Ascending aorta (tissue), 2 donors: ENCODE measurements at regions of chr16 and their contacts with region 1.

Region 1: GRCh38 chr16:79770244-79771064 is 169.9 kb upstream of the MAF start:
- DNase-seq: peak; percentile 51 to 94
- H3K4me3 ChIP-seq: peak overlapping the region; percentile 64 to 75
- H3K27ac ChIP-seq: peak overlapping the region; percentile 78 to 82
- H3K4me1 ChIP-seq: peaks cover 0 to 22% of the 10 kb centered on the region in 2 donors
- H3K27me3 ChIP-seq: no peaks in the 10 kb centered on the region
- CTCF ChIP-seq: no peak

Region 2: GRCh38 chr16:79372503-79373184 is 397.8 kb before region 1 on chr16:
- intact Hi-C with region 1: no loop called
- DNase-seq: no peak
- H3K4me3 ChIP-seq: no peak overlapping the region
- H3K27ac ChIP-seq: no peak overlapping the region
- H3K4me1 ChIP-seq: no peaks in the 10 kb centered on the region
- H3K27me3 ChIP-seq: no peaks in the 10 kb centered on the region
- CTCF ChIP-seq: no peak

Region 3: GRCh38 chr16:79673635-79674034 is 96.8 kb before region 1 on chr16:
- intact Hi-C with region 1: loop called (anchors 5 kb)
- DNase-seq: no peak
- H3K4me3 ChIP-seq: no peak overlapping the region
- H3K27ac ChIP-seq: peak overlapping the region; percentile 21 to 75
- H3K4me1 ChIP-seq: peaks cover 4 to 22% of the 10 kb centered on the region in 2 donors
- H3K27me3 ChIP-seq: no peaks in the 10 kb centered on the region
- CTCF ChIP-seq: no peak